Activated naive CD4-positive, alpha-beta T cell treated with anti-CD3 and anti-CD28 coated beads for 36 hours (primary cell): ENCODE measurements at regions of chr1 and their contacts with region 1.

Region 1: DNA sequence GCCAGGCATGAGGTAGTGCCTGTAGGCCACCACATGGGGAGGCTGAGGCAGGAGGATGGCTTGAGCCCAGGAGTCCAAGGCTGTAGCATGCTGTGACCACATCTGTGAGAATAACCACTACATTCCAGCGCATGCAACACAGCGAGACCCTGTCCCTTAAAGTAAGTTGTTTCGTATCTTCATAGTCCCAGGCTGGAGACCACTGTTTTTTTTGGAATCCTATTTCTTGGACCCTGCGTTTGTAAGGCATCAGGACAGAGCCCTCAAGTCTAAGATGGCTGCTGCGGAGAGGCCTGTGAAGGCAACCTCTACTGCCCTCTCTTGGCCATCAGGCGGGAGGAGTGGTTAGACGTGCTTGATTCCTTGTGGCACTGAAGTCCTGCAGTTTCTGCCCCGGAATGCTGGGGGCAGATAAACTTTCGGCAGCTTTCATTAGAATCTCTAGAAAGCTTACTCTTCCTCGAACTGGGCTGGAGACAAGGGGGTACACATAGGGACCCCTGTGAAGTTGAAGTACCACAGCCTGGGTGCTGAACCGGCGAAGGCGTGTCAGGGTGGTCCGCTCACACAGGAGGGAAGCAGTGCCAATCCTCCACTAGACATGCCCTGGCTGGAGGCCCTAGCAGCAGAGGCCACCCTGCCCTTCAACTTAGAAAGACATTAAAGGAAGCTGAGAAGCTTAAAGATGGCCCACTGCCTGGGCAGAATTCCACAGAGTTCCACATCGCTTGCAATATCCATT is 36.6 kb downstream of the RABIF start:
- DNase-seq: peak; percentile 69
- H3K4me3 Mint-ChIP-seq: no peak overlapping the region
- H3K27ac Mint-ChIP-seq: no peak overlapping the region
- H3K4me1 Mint-ChIP-seq: no peaks in the 10 kb centered on the region
- H3K27me3 Mint-ChIP-seq: no peaks in the 10 kb centered on the region

Region 2: DNA sequence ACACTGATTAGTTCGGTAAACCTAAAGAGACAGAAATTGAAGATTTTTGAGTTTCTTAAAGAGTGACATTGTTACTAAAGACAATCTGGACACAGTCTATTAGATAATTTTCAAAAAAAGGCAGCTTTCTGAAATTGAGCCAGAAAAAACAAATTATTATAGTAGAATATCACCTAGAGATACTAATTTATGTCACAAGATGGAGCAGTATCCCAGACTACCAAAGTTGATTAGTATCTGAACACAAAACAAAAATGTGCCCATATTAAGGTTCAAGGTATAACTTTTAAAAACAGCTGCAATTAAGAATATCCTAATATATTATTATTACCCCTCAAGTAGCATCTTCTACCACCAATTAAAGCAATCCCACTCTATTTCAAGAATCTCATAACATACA is 101.6 kb before region 1 on chr1:
- CTCF ChIA-PET with region 1: interaction called, 23 read pairs
- intact Hi-C with region 1: loop called (anchors 1 kb)
- DNase-seq: no peak
- H3K4me3 Mint-ChIP-seq: no peak overlapping the region
- H3K27ac Mint-ChIP-seq: no peak overlapping the region
- H3K4me1 Mint-ChIP-seq: no peaks in the 10 kb centered on the region
- H3K27me3 Mint-ChIP-seq: no peaks in the 10 kb centered on the region

Region 3: GRCh38 chr1:202998836-202999750 is 146.8 kb after region 1 on chr1:
- CTCF ChIA-PET with region 1: no interaction called
- intact Hi-C with region 1: no loop called
- DNase-seq: peak; percentile 83
- H3K4me3 Mint-ChIP-seq: peak overlapping the region; percentile 22
- H3K27ac Mint-ChIP-seq: no peak overlapping the region
- H3K4me1 Mint-ChIP-seq: peaks cover 4% of the 10 kb centered on the region
- H3K27me3 Mint-ChIP-seq: peaks cover 26% of the 10 kb centered on the region